ENCODE measurements at regions of chr4 and their contacts with region 1.

Region 1: GRCh38 chr4:5142726-5143125 is 91.4 kb downstream of the STK32B start:
- DNase-seq: no peak
- ATAC-seq: no peak
- H3K4me3 ChIP-seq: no peak overlapping the region
- H3K27ac ChIP-seq: no peak overlapping the region
- H3K4me1 ChIP-seq: no peaks in the 10 kb centered on the region
- H3K27me3 ChIP-seq: no peaks in the 10 kb centered on the region
- CTCF ChIP-seq: peak; percentile 68

Region 2: DNA sequence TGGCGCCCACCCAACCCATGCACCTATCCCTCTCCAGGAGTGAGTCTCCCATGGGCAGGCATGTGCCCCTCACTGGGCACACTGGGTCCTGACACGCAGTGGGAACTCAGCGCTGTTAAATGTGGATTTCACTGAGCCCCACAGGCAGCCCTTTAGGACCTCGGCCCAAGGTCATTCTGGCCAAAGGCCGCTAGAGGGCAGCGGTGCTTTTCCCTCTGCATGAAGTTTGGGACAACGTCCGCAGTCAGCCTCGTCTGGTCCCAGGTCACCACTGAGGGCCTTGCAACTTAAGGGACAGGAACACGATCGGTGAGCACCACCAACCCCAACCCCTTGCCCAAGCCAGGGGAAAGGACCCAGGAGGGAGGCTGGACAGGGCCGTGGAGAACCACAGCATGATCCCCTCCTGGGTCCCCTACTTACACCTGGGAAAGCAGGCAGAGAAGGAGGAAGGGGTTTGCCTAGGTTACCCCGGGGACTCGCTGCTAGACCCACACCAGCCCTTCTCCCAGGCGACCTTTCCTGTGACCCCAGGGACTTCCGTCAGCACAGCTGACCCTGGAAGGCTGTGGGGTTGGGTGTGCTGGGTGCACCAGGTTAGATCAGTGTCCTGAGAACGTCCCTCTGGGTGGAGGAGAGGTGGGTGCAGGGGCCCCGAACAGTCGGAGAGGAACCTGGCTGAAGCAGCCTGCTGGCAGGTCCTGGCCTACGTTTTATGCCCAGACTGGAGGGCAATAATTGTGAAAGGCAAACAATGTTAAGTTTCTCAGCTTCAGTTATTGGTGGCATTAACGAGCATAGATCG is 147.4 kb before region 1 on chr4:
- CTCF ChIA-PET with region 1: no interaction called
- POLR2A ChIA-PET with region 1: no interaction called
- in situ Hi-C with region 1: no loop called
- intact Hi-C with region 1: loop called (anchors 10 kb)
- DNase-seq: peak; percentile 48
- ATAC-seq: peak; percentile 94
- H3K4me3 ChIP-seq: no peak overlapping the region
- H3K27ac ChIP-seq: peak overlapping the region; percentile 54
- H3K4me1 ChIP-seq: peaks cover 17% of the 10 kb centered on the region
- H3K27me3 ChIP-seq: no peaks in the 10 kb centered on the region
- CTCF ChIP-seq: peak; percentile 91